Calu3 (cell line): ENCODE measurements at regions of chr2 and their contacts with region 1.

Region 1: GRCh38 chr2:71498261-71498701 is 44.9 kb downstream of the DYSF start:
- DNase-seq: peak; percentile 72
- H3K4me3 Mint-ChIP-seq: no peak overlapping the region
- H3K27ac Mint-ChIP-seq: peak overlapping the region; percentile 89
- H3K4me1 Mint-ChIP-seq: peaks cover 58% of the 10 kb centered on the region
- H3K27me3 Mint-ChIP-seq: no peaks in the 10 kb centered on the region
- CTCF ChIP-seq: no peak

Region 2: GRCh38 chr2:71216502-71216901 is 281.8 kb before region 1 on chr2:
- CTCF ChIA-PET with region 1: no interaction called
- intact Hi-C with region 1: loop called (anchors 10 kb)
- DNase-seq: no peak
- H3K4me3 Mint-ChIP-seq: no peak overlapping the region
- H3K27ac Mint-ChIP-seq: no peak overlapping the region
- H3K4me1 Mint-ChIP-seq: no peaks in the 10 kb centered on the region
- H3K27me3 Mint-ChIP-seq: no peaks in the 10 kb centered on the region
- CTCF ChIP-seq: no peak